Mammary epithelial cell (primary cell): ENCODE measurements at regions of chr2 and their contacts with region 1.

Region 1: DNA sequence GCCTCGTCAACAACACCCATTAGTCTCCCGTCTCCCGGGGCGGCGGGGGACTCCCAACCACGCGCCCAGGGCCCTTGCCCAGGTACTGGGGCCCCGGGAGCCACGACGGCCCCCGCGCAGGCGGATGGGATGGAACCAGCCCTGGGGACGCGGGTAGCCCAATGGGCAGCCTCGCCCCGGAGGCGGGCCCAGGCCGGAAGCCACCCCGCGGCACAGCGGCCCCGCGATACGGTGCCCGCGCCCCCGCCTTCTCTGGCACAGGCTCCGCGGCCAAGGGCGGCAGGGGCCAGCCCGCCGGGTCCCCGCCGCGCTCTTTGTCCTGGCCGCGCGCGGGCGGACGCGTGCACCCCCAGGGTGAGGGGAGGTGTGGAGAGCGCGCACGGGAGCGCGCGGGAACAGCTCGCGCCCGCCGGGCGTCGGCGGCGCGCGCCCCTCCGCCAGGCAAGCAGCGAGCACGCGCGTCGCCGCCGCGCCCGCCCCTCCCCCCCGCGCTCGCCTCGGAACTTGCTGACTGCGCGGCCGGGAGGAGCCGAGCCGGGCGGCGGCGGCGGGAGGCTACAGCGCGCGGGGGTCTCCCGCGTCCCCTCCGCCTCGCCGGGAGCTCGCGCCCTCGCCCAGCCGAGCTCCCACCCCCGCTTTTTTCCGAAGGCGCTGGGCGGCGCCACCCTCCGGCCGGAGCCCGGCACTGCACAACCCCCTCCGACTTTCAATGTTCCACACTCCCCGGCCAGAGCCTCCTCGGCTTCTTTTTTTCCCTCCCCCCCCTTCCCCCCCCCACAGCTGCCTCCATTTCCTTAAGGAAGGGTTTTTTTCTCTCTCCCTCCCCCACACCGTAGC is at the start of gene UBE2E3:
- DNase-seq: peak; percentile 67
- H3K4me3 ChIP-seq: peak within 1 kb of the TSS; percentile 62 to 82 (median 80)
- H3K27ac ChIP-seq: peak within 1 kb of the TSS; percentile 72
- H3K4me1 ChIP-seq: peaks cover 23% of the 10 kb centered on the region
- H3K27me3 ChIP-seq: no peaks in the 10 kb centered on the region
- CTCF ChIP-seq: peak; percentile 20 to 77
- total RNA-seq, gene UBE2E3: 65.0 to 86.3 TPM

Region 2: DNA sequence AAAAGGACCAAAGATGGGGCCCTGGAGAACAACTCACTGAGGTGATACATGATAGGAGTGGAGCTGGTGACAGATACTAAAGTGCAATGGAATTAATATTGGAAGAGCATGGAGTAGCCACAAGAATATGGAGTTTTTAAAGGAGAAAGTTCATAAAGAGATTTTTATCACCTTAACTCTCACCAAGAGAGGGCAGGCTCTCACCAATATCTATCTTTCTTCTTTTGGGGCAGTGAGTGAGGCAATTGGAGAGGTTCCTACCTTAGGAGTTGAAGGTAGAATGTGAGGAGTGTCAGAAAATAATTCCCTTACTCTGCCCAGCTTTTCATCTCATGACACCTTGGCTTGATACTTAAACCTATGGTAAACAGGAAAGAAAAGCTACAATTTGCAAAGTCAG is 739.5 kb before region 1 on chr2:
- CTCF ChIA-PET with region 1: no interaction called
- dilution Hi-C with region 1: no loop called
- in situ Hi-C with region 1: no loop called
- intact Hi-C with region 1: loop called (anchors 2 kb)
- DNase-seq: peak; percentile 27
- H3K4me3 ChIP-seq: no peak overlapping the region
- H3K27ac ChIP-seq: no peak overlapping the region
- H3K4me1 ChIP-seq: no peaks in the 10 kb centered on the region
- H3K27me3 ChIP-seq: no peaks in the 10 kb centered on the region
- CTCF ChIP-seq: peak; percentile 40 to 62

Region 3: DNA sequence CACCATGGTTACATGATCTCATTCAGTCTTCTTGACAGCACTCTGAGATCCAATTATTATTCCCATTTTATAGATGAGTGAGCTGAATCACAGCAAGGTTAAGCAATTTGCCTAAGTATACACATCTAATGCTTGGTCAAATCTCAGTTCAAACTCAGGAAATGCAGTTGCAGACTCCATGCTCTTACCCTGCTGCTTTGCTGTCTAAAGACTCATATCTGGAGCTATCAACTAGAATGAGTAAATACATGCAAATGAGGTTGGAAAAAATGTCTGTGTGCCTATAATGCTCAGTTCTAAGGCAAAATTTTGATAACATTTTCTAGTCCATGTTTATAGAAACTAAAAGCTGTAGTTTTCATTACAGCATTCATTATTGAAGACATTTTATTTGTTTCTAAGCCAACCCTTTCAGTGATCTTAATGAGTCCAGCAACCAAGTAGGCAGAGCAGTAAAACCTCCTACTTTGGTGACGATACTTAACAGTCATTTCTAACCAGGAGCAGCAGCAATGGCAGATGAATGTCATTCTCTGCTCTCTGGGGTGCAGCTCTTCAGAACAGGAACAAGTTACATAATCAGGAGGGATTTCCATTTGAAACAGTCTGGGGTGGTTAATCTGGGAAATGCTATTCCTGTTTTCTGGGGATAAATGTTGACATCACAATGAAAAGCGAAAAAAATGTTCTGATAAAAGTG is 396.7 kb before region 1 on chr2:
- CTCF ChIA-PET with region 1: interaction called, 15 read pairs
- dilution Hi-C with region 1: no loop called
- in situ Hi-C with region 1: no loop called
- intact Hi-C with region 1: no loop called
- DNase-seq: no peak
- H3K4me3 ChIP-seq: no peak overlapping the region
- H3K27ac ChIP-seq: no peak overlapping the region
- H3K4me1 ChIP-seq: no peaks in the 10 kb centered on the region
- H3K27me3 ChIP-seq: no peaks in the 10 kb centered on the region
- CTCF ChIP-seq: no peak

Region 4: DNA sequence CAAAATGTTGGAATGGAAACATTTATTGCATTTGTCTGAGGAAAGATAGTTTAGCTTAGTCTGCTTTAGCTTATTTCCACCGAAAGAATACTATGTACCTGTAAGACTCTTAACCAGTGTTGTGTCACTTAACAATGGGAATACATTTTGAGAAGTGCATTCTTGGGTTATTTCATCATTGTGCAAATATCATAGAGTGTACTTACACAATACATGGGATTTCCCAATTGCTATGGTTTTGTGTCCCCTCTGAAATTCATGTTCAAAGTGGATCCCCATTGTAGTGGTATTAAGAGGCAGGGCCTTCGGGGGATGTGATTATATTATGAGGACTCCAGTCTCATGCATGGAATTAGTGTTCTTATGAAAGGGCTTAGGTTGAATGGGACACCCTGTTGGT is 249.3 kb before region 1 on chr2:
- CTCF ChIA-PET with region 1: no interaction called
- dilution Hi-C with region 1: no loop called
- in situ Hi-C with region 1: no loop called
- intact Hi-C with region 1: loop called (anchors 10 kb)
- DNase-seq: peak; percentile 70
- H3K4me3 ChIP-seq: no peak overlapping the region
- H3K27ac ChIP-seq: no peak overlapping the region
- H3K4me1 ChIP-seq: peaks cover 22% of the 10 kb centered on the region
- H3K27me3 ChIP-seq: no peaks in the 10 kb centered on the region
- CTCF ChIP-seq: no peak

Region 5: DNA sequence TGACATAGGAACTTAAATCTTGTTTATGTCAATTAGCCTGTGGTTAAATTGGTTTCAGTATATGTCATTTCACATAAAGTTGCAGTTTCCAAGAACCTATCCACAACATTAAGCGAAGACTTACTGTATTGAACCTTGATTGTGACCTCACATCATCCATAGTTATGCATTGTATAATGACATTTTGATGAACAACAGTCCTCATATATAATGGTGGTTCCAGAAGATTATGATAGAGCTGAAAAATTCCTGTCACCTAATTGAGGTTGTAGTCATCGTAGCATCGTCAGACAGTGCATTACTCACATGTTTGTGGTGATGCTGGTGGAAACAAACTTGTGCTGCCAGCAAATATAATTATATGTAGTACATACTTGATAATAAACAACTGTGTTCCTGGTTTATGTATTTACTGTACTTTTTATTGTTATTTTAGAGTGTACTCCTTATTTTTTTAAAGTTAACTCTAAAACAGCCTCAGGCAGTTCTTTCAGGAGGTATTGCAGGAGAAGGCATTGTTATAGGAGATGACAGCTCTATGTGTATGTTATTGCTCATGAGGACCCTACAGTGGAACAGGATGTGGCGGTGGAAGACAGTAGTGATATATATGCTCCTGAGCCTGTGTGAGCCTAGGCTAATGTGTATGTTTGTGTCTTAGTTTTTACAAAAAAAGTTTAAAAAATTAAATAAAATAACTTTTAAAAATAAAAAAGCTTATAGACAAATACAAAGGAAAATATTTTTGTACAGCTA is 56.7 kb after region 1 on chr2:
- CTCF ChIA-PET with region 1: no interaction called
- dilution Hi-C with region 1: no loop called
- in situ Hi-C with region 1: no loop called
- intact Hi-C with region 1: no loop called
- DNase-seq: peak; percentile 74
- H3K4me3 ChIP-seq: no peak overlapping the region
- H3K27ac ChIP-seq: peak overlapping the region; percentile 51
- H3K4me1 ChIP-seq: peaks cover 31% of the 10 kb centered on the region
- H3K27me3 ChIP-seq: no peaks in the 10 kb centered on the region
- CTCF ChIP-seq: no peak

Region 6: DNA sequence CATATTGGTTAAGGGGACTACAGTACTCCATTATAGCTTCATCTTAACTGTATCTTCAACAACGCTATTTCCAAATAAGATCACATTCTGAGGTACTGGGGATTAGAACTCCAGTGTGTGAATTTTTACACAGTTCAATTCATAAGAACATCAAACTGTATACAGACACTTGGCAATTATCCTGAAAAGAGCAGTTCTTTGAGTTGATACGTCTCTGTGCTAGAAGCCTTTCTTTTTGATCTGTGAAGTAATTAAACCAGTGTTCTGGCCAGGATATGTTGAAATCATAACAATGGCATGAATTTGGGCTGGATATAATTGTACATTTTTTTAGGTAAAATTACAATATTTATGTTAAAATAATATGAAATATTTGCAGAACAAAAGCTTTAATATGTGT is 817.7 kb after region 1 on chr2:
- CTCF ChIA-PET with region 1: interaction called, 10 read pairs
- dilution Hi-C with region 1: no loop called
- in situ Hi-C with region 1: no loop called
- intact Hi-C with region 1: no loop called
- DNase-seq: no peak
- H3K4me3 ChIP-seq: no peak overlapping the region
- H3K27ac ChIP-seq: no peak overlapping the region
- H3K4me1 ChIP-seq: no peaks in the 10 kb centered on the region
- H3K27me3 ChIP-seq: no peaks in the 10 kb centered on the region
- CTCF ChIP-seq: no peak